ENCODE measurements at regions of chr11 and their contacts with region 1.

Region 1: GRCh38 chr11:65013692-65014145 is 241 bp upstream of the ARL2 start:
- DNase-seq: peak; percentile 74
- H3K4me3 ChIP-seq: peak overlapping the region; percentile 64 to 85 (median 72)
- H3K27ac ChIP-seq: peak overlapping the region; percentile 90
- H3K4me1 ChIP-seq: peaks cover 11% of the 10 kb centered on the region
- H3K27me3 ChIP-seq: no peaks in the 10 kb centered on the region
- CTCF ChIP-seq: no peak

Region 2: DNA sequence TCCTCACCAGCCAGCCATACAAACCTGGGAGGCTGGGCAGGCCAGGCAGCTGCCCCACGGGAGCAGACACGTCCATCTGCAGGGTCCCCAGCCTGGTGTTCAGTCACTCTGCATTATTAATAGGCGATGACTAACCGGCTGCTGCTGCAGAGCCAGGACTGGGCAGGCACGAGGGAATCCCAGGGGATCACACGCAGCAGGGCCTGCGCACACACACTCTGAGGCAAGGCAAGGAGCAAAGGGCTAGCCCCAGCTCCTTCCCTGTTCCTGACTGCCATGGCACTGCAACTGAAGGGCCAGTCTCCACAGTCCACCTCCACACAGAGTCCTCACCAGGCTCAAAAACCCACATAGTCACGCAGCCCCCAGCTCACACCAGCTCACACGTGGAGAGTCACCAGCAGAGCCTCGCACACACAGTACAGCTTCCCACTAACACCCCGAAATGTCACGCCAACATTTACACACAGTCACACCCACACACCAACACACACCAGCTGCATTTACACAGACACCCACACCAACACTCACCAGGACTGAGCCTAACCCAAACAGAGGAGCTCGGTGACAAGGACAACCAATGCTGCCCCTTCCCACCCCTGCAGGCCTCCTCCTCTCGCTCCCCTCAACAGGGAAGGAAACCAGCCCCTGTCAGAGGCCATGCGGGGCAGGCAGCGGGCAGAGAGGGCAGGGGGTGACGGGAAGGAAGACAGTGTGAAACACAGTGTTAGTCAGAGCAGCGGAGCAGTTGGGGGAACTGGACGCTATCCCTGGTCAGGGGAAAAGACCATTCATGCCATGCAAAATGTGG is 338.1 kb before region 1 on chr11:
- CTCF ChIA-PET with region 1: no interaction called
- dilution Hi-C with region 1: no loop called
- in situ Hi-C with region 1: no loop called
- intact Hi-C with region 1: no loop called
- DNase-seq: peak; percentile 48
- H3K4me3 ChIP-seq: no peak overlapping the region
- H3K27ac ChIP-seq: no peak overlapping the region
- H3K4me1 ChIP-seq: peaks cover 6% of the 10 kb centered on the region
- H3K27me3 ChIP-seq: no peaks in the 10 kb centered on the region
- CTCF ChIP-seq: no peak

Region 3: DNA sequence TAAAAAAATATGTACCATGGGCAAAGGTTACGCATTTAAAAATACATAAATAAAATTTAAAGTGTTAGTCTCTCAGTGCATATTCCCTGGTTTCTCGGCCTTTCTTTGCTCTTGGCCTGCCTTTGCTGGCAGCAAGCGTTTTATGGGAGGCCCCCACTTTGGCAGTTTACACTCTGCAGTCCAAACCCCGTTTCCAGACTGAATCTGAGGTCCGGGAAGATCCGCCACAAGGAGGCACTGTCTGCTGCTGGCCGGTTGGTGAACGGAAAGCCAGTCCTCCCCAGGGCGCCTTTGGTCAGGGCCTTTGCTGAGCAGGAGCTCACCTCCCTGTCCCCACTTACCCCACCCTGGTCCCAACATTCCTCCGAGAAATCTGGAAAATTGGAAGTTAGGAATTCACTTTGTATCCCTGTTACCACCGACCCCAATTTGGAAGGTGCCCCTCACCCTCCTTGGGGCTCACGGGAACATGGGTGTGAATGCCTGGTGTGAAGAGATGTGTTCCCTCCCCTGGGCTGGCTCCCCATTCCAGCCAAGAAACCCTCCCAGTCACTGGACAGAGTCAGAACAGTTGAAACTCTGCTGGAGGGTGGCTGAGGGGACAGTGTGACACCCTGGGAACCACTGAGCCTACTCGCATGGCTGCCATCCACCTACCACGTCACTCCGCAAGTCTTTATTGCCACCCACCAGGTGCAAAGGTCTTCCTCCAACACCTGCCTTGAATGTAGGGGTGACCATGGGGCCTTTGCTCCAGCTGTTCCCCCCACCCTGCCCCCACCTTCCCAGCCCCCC is 226.0 kb before region 1 on chr11:
- CTCF ChIA-PET with region 1: no interaction called
- dilution Hi-C with region 1: loop called (anchors 5 kb)
- in situ Hi-C with region 1: no loop called
- intact Hi-C with region 1: loop called (anchors 2 kb)
- DNase-seq: peak; percentile 25
- H3K4me3 ChIP-seq: no peak overlapping the region
- H3K27ac ChIP-seq: no peak overlapping the region
- H3K4me1 ChIP-seq: no peaks in the 10 kb centered on the region
- H3K27me3 ChIP-seq: no peaks in the 10 kb centered on the region
- CTCF ChIP-seq: peak; percentile 81 to 92

Region 4: DNA sequence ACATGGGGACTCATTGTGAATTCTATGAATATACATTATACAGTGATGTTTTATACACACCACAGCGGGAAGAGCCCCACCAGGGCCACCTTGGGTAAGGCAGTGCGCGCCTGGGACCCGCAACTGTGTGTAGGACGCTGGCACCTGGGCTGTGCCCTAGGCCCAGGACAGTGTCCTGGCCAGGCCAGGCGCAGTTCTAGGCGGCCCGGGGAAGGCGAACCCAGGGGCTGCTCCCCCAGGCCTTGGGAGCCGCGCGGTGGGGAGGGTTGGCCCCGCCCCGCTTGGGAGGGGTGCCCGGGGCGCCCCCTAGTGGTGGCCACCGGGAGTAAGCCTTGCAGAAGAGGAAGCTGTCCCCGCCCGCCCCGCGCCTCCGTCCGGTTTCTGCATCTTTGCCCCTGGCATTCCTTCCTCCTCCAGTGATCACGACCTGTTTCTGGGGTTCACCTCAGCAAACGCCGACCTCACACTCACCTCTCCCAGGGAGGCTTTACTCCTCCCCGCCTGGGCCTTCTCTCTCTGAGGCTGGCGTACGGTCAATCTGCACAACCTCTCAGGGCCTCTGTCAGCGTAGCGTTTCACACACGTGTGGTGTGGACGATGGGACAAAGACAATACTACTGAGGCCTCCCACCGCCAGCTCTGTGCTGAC is 125.8 kb before region 1 on chr11:
- CTCF ChIA-PET with region 1: no interaction called
- dilution Hi-C with region 1: no loop called
- in situ Hi-C with region 1: no loop called
- intact Hi-C with region 1: no loop called
- DNase-seq: peak; percentile 49
- H3K4me3 ChIP-seq: peak overlapping the region in 1 of 3 experiments; percentile 19
- H3K27ac ChIP-seq: no peak overlapping the region
- H3K4me1 ChIP-seq: peaks cover 8% of the 10 kb centered on the region
- H3K27me3 ChIP-seq: no peaks in the 10 kb centered on the region
- CTCF ChIP-seq: peak; percentile 61 to 94

Region 5: DNA sequence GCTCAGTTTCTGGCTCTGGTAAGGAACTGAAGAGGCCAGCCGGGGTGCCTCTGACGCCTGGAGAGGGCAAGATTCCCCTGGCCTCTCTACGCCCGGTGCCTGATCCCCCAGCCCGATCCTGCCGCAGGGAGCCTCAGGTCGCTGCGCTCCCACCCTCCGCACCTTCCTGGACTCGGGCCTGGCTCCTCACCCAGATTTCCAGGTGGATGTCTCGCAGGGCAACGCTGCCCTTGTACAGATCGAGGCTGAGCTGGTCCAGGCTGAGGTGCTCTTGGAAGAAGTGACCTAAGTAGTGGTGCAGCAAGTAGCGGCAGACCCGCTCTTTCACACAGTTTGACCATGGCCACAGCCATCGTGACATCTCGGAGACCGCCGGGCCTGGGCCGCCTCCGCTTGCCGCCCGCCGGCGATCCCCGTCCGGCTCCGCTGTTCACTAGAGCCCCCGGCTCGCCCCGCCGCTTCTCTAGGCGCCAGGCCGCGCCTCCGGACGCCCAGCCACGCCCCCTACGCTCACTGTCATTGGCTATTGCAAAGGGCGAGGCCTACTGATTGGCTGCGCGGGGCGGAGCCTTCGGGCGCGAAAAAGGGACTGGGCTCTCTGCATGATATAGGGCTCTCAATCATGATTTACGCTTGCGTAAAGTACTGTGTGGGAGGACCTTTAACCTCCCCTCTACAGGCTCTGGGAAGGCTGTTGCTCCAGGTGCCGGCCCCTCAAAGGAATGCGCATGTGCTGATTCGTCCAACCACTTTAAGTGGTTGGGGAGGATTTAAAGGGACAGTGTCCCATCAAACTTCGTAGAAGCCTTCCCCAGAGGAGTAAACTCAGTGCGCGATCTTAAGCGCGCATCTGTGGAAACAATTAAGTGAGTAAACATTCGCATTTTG is 96.7 kb before region 1 on chr11 and contains the start of gene ATG2A:
- CTCF ChIA-PET with region 1: no interaction called
- dilution Hi-C with region 1: no loop called
- in situ Hi-C with region 1: no loop called
- intact Hi-C with region 1: loop called (anchors 1 kb)
- DNase-seq: peak; percentile 100
- H3K4me3 ChIP-seq: peak within 1 kb of the TSS; percentile 66 to 87 (median 71)
- H3K27ac ChIP-seq: peak within 1 kb of the TSS; percentile 70
- H3K4me1 ChIP-seq: peaks cover 9% of the 10 kb centered on the region
- H3K27me3 ChIP-seq: no peaks in the 10 kb centered on the region
- CTCF ChIP-seq: no peak
- total RNA-seq, gene ATG2A: 20.7 to 21.0 TPM

Region 6: GRCh38 chr11:65027213-65028067 is 13.7 kb after region 1 on chr11 and contains the start of gene SNX15:
- CTCF ChIA-PET with region 1: no interaction called
- dilution Hi-C with region 1: no loop called
- in situ Hi-C with region 1: no loop called
- intact Hi-C with region 1: loop called (anchors 1 kb)
- DNase-seq: peak; percentile 96
- H3K4me3 ChIP-seq: peak within 1 kb of the TSS; percentile 54 to 80 (median 72)
- H3K27ac ChIP-seq: peak within 1 kb of the TSS; percentile 41
- H3K4me1 ChIP-seq: peaks cover 11% of the 10 kb centered on the region
- H3K27me3 ChIP-seq: no peaks in the 10 kb centered on the region
- CTCF ChIP-seq: peak; percentile 34 to 66
- total RNA-seq, gene SNX15: 12.3 to 19.7 TPM

Region 7: GRCh38 chr11:65102142-65103095 is 88.7 kb after region 1 on chr11:
- CTCF ChIA-PET with region 1: interaction called, 3 read pairs
- dilution Hi-C with region 1: loop called (anchors 5 kb)
- in situ Hi-C with region 1: no loop called
- intact Hi-C with region 1: no loop called
- DNase-seq: no peak
- H3K4me3 ChIP-seq: no peak overlapping the region
- H3K27ac ChIP-seq: no peak overlapping the region
- H3K4me1 ChIP-seq: no peaks in the 10 kb centered on the region
- H3K27me3 ChIP-seq: no peaks in the 10 kb centered on the region
- CTCF ChIP-seq: no peak

Region 8: GRCh38 chr11:65180877-65181568 is 167.3 kb after region 1 on chr11:
- CTCF ChIA-PET with region 1: no interaction called
- dilution Hi-C with region 1: no loop called
- in situ Hi-C with region 1: no loop called
- intact Hi-C with region 1: loop called (anchors 5 kb)
- DNase-seq: peak; percentile 57
- H3K4me3 ChIP-seq: peak overlapping the region; percentile 57 to 95 (median 94)
- H3K27ac ChIP-seq: peak overlapping the region; percentile 56
- H3K4me1 ChIP-seq: peaks cover 26% of the 10 kb centered on the region
- H3K27me3 ChIP-seq: no peaks in the 10 kb centered on the region
- CTCF ChIP-seq: peak; percentile 25 to 65

Measured in mammary epithelial cell (primary cell).